Calu3 (cell line): ENCODE measurements at regions of chr9 and their contacts with region 1.

Region 1: GRCh38 chr9:129962889-129963703 is 79.9 kb downstream of the FNBP1 start:
- DNase-seq: peak; percentile 11
- H3K4me3 Mint-ChIP-seq: peak overlapping the region; percentile 61
- H3K27ac Mint-ChIP-seq: peak overlapping the region; percentile 49
- H3K4me1 Mint-ChIP-seq: peaks cover 9% of the 10 kb centered on the region
- H3K27me3 Mint-ChIP-seq: no peaks in the 10 kb centered on the region
- CTCF ChIP-seq: no peak

Region 2: GRCh38 chr9:129823935-129824601 is 139.0 kb before region 1 on chr9 and contains the start of gene TOR1A:
- CTCF ChIA-PET with region 1: no interaction called
- intact Hi-C with region 1: no loop called
- DNase-seq: peak; percentile 86
- H3K4me3 Mint-ChIP-seq: peak within 1 kb of the TSS; percentile 76
- H3K27ac Mint-ChIP-seq: no peak within 1 kb of the TSS
- H3K4me1 Mint-ChIP-seq: no peaks in the 10 kb centered on the region
- H3K27me3 Mint-ChIP-seq: no peaks in the 10 kb centered on the region
- CTCF ChIP-seq: no peak
- total RNA-seq, gene TOR1A: 34.2 and 36.3 TPM in 2 replicates

Region 3: DNA sequence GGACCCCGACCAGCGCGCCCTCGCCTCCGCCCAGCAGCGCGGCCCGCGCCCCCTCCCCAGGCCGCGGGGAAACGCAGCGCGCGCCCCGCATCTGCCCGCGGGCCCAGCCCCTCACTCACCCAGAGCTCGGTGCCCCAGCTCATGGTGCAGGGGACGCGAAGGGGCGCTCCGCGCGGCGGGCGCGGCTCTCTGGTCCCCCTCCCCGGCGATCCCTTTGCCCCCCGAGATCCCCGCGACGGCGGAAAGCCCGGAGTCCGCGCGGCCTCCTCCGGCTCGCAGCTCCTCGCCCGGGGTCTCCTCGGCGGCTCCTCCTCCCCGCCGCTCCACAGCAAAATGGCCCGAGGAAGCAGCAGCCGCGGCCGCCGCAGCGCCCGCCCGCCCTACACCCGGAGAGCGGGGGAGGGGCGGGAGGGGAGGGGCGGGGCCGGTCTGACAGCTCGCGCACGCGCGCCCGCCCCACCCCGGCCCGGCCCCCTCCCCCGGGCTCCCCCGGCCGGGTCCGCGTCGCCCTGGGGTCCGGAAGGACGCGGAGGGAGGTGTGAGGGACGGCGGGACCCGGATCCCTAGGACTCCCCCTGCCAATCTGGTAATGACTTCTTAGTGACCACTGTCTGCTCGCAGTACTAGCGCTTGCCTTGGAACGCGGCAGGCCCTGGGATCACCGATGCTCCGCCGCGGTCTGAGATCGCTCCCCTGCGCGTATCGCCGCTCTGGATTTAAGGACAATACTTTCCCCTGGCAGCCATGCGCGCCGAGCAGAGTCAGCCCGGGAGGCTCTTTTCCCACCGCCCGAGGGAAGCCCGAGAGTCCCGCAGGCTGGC is 79.9 kb after region 1 on chr9 and contains the start of gene FNBP1:
- CTCF ChIA-PET with region 1: no interaction called
- intact Hi-C with region 1: loop called (anchors 10 kb)
- DNase-seq: peak; percentile 65
- H3K4me3 Mint-ChIP-seq: peak within 1 kb of the TSS; percentile 90
- H3K27ac Mint-ChIP-seq: peak within 1 kb of the TSS; percentile 78
- H3K4me1 Mint-ChIP-seq: peaks cover 15% of the 10 kb centered on the region
- H3K27me3 Mint-ChIP-seq: no peaks in the 10 kb centered on the region
- CTCF ChIP-seq: no peak
- total RNA-seq, gene FNBP1: 9.6 and 9.9 TPM in 2 replicates